Endothelial cell of umbilical vein (primary cell): ENCODE measurements at regions of chr13 and their contacts with region 1.

Region 1: GRCh38 chr13:52194184-52194868 is 34.9 kb upstream of the NEK3 start:
- DNase-seq: peak; percentile 68
- H3K4me3 ChIP-seq: peak overlapping the region; percentile 37 to 88 (median 73)
- H3K27ac ChIP-seq: peak overlapping the region; percentile 43
- H3K4me1 ChIP-seq: peaks cover 9% of the 10 kb centered on the region
- H3K27me3 ChIP-seq: no peaks in the 10 kb centered on the region
- CTCF ChIP-seq: no peak
- POLR2A ChIP-seq: peak; percentile 91

Region 2: DNA sequence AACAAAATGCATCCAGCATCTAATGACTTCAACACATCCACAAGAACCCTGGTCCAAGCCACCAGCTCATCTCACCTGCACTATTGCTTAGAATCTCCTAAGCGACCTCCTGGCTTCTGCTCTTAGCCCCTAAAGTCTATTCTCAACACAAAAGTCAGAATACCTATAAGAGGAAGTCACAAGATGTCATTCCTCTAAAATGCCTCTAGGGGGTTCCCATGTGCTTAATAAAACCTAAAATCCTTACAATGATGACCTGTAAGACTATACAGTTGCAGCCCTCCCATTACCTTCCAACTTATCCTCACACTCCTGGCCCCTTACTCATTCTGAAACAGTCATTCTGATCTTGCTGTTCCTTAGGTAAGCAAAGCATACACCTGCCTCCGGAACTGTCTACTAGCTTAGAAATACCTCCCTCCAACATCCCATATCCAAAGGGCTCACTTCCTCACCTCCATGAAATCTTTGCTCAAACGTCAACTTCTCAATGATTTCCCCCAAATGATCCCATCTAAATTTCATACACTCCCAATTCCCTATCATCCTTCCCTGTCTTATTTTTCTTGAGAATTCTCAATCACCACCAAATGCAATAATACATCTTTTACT is 193.1 kb before region 1 on chr13:
- CTCF ChIA-PET with region 1: interaction called, 3 read pairs
- POLR2A ChIA-PET with region 1: no interaction called
- dilution Hi-C with region 1: no loop called
- intact Hi-C with region 1: loop called (anchors 2 kb)
- DNase-seq: peak; percentile 38
- H3K4me3 ChIP-seq: no peak overlapping the region
- H3K27ac ChIP-seq: no peak overlapping the region
- H3K4me1 ChIP-seq: no peaks in the 10 kb centered on the region
- H3K27me3 ChIP-seq: peaks cover 10 to 11% of the 10 kb centered on the region in 2 experiments
- CTCF ChIP-seq: peak; percentile 42 to 61
- POLR2A ChIP-seq: no peak

Region 3: GRCh38 chr13:52159321-52160086 is 34.8 kb before region 1 on chr13 and contains the start of gene NEK3:
- CTCF ChIA-PET with region 1: interaction called, 5 read pairs
- POLR2A ChIA-PET with region 1: no interaction called
- dilution Hi-C with region 1: no loop called
- intact Hi-C with region 1: loop called (anchors 1 kb)
- DNase-seq: peak; percentile 71
- H3K4me3 ChIP-seq: peak within 1 kb of the TSS; percentile 81 to 92 (median 90)
- H3K27ac ChIP-seq: peak within 1 kb of the TSS; percentile 46
- H3K4me1 ChIP-seq: peaks cover 52% of the 10 kb centered on the region
- H3K27me3 ChIP-seq: no peaks in the 10 kb centered on the region
- CTCF ChIP-seq: no peak
- POLR2A ChIP-seq: no peak
- total RNA-seq, gene NEK3: 13.8 and 23.5 TPM in 2 replicates